SK-N-SH (cell line): ENCODE measurements at regions of chr17 and their contacts with region 1.

Region 1: DNA sequence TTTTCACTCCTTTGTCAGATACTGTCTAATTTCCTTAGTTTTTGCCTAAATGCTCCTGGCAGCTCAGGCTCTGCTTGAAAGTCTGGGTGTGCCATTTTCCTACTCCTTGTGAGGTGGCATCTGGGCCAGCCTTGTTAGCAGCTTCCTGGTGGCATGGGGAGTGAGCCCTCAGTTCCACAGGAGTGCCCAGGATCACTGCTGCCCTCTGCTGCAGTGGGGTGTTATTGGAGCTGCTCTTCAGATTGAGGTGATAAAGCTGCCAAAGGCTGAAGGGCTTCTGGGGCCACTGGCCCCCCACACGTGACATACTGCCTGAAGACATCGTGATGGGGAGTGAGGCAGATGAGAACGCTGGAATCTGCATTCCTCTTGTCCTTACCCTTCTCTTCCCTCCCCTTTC is 27.4 kb downstream of the CEP95 start:
- DNase-seq: no peak
- H3K4me3 ChIP-seq: no peak overlapping the region
- H3K27ac ChIP-seq: peak overlapping the region in 1 of 2 experiments; percentile 6; a peak in 1 of 4 replicates
- H3K4me1 ChIP-seq: no peaks in the 10 kb centered on the region
- H3K27me3 ChIP-seq: no peaks in the 10 kb centered on the region
- CTCF ChIP-seq: peak; percentile 32; the same call in 1 of the 2 replicates
- EP300 ChIP-seq: no peak
- RAD21 ChIP-seq: no peak

Region 2: DNA sequence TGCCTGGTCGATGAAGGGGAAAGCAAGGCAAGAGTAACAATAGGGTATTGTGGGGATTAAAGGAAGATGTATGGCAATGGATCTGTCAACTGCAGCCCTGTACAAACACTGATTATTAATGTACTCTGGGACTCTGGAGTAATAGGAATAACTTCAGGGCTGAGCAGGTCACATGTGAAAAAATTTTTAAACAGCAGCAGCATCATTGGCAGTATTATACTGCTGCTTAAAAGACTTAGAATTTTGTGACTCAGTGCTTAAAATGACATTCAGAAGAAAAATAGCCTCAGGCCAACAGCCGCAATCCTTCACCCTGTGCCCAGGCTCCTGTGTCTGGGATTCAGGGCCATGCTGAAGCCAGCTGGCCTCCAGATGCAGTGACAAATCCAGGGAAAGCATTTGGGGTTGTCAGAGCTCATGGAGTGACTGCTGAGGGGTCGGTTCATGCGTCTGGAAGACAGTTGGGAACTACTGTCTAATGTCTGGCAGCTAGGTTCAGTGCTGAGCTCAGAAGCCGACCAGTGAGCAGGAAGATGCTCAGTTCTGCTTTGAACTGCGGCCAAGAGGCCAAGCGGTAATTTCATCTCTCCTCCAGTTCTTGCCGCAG is 293.3 kb before region 1 on chr17:
- CTCF ChIA-PET with region 1: no interaction called
- POLR2A ChIA-PET with region 1: no interaction called
- DNase-seq: peak; percentile 87
- H3K4me3 ChIP-seq: peak overlapping the region; percentile 1 to 45; a peak in 3 of 4 replicates
- H3K27ac ChIP-seq: peak overlapping the region; percentile 79 to 97
- H3K4me1 ChIP-seq: peaks cover 36 to 44% of the 10 kb centered on the region in 2 experiments
- H3K27me3 ChIP-seq: no peaks in the 10 kb centered on the region
- CTCF ChIP-seq: no peak
- EP300 ChIP-seq: peak; percentile 51 to 91; a peak in 3 of 4 replicates
- RAD21 ChIP-seq: peak; percentile 46

Region 3: DNA sequence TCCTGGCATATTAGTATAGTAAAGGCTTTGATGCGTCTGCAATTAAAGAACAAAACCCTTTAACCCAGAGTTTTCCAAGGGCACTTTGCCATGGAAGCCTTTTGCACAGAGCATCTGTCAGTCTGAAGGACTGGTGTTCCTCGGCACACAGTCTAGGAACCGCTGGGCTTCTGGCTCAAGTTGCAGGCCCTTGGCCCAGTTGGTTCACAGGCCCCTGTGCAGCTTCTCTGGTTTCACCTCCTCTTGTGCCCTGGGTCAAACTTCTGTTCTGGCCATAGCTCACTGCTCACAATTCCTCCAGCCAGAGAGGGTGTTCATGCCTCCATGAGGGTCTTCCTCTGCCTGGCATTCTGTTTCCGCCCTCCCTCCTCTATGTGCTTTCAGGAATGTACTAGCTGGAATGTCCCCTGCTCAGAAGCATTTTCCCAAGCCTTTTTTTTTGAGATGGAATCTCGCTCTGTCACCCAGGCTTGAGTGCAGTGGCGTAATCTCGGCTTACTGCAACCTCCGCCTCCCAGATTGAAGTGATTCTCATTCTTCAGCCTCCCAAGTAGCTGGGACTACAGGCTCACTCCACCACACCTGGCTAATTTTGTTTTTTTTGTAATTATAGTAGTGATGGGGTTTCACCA is 236.6 kb before region 1 on chr17:
- CTCF ChIA-PET with region 1: no interaction called
- POLR2A ChIA-PET with region 1: no interaction called
- DNase-seq: no peak
- H3K4me3 ChIP-seq: no peak overlapping the region
- H3K27ac ChIP-seq: no peak overlapping the region
- H3K4me1 ChIP-seq: no peaks in the 10 kb centered on the region
- H3K27me3 ChIP-seq: no peaks in the 10 kb centered on the region; the same call in 1 of the 2 replicates
- CTCF ChIP-seq: no peak
- EP300 ChIP-seq: no peak
- RAD21 ChIP-seq: no peak

Region 4: DNA sequence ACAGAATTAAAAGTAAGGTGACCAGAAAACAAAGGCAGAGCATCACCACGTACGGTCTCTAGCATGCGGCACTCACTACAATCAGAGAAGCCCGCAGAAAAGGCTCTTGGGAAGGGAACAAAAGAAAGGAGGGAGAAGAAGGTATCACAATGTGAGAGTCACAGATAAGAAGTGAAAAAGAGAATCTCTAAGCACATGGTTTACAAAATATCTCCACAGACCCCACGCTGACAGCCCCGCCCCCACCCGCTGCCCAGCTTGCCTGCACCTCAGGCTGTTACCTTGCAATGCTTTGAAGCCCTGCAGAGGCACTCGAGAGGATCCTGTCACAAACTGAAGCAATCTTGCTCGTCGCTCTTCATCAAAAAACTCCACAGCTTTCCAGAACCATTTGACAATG is 13.1 kb after region 1 on chr17:
- CTCF ChIA-PET with region 1: interaction called, 18 read pairs
- POLR2A ChIA-PET with region 1: interaction called, 3 read pairs
- DNase-seq: no peak
- H3K4me3 ChIP-seq: no peak overlapping the region
- H3K27ac ChIP-seq: no peak overlapping the region; a peak in 1 of 4 replicates
- H3K4me1 ChIP-seq: no peaks in the 10 kb centered on the region
- H3K27me3 ChIP-seq: no peaks in the 10 kb centered on the region
- CTCF ChIP-seq: no peak
- EP300 ChIP-seq: no peak
- RAD21 ChIP-seq: no peak

Region 5: GRCh38 chr17:64648234-64648633 is 114.1 kb after region 1 on chr17:
- CTCF ChIA-PET with region 1: interaction called, 10 read pairs
- POLR2A ChIA-PET with region 1: no interaction called
- DNase-seq: no peak
- H3K4me3 ChIP-seq: no peak overlapping the region
- H3K27ac ChIP-seq: peak overlapping the region in 1 of 2 experiments; percentile 37; a peak in 1 of 4 replicates
- H3K4me1 ChIP-seq: peaks cover 3 to 14% of the 10 kb centered on the region in 2 experiments; a peak in 3 of 4 replicates
- H3K27me3 ChIP-seq: no peaks in the 10 kb centered on the region
- CTCF ChIP-seq: no peak
- EP300 ChIP-seq: no peak
- RAD21 ChIP-seq: no peak

Region 6: GRCh38 chr17:64653325-64653984 is 119.3 kb after region 1 on chr17:
- CTCF ChIA-PET with region 1: interaction called, 10 read pairs
- POLR2A ChIA-PET with region 1: no interaction called
- DNase-seq: no peak
- H3K4me3 ChIP-seq: peak overlapping the region in 1 of 2 experiments; percentile 1; a peak in 1 of 4 replicates
- H3K27ac ChIP-seq: peak overlapping the region in 1 of 2 experiments; percentile 33; a peak in 2 of 4 replicates
- H3K4me1 ChIP-seq: peaks cover 2 to 31% of the 10 kb centered on the region in 2 experiments
- H3K27me3 ChIP-seq: no peaks in the 10 kb centered on the region
- CTCF ChIP-seq: no peak
- EP300 ChIP-seq: no peak
- RAD21 ChIP-seq: no peak